ENCODE measurements at regions of chr6 and their contacts with region 1.

Region 1: GRCh38 chr6:106556368-106556960 is 72.8 kb downstream of the RTN4IP1 start:
- DNase-seq: peak in 1 of 2 experiments; percentile 52
- H3K4me3 ChIP-seq: no peak overlapping the region
- H3K4me1 ChIP-seq: peaks cover 4% of the 10 kb centered on the region; the same call in 1 of the 2 replicates
- H3K27me3 ChIP-seq: no peaks in the 10 kb centered on the region

Region 2: GRCh38 chr6:106339334-106340029 is 217.0 kb before region 1 on chr6:
- in situ Hi-C with region 1: loop called (anchors 10 kb)
- DNase-seq: peak; percentile 75 to 76
- H3K4me3 ChIP-seq: no peak overlapping the region
- H3K4me1 ChIP-seq: no peaks in the 10 kb centered on the region
- H3K27me3 ChIP-seq: no peaks in the 10 kb centered on the region; the same call in 1 of the 2 replicates

Region 3: GRCh38 chr6:107345393-107345792 is 788.9 kb after region 1 on chr6:
- in situ Hi-C with region 1: no loop called
- DNase-seq: no peak
- H3K4me3 ChIP-seq: no peak overlapping the region
- H3K4me1 ChIP-seq: peaks cover 4% of the 10 kb centered on the region; the same call in 1 of the 2 replicates
- H3K27me3 ChIP-seq: no peaks in the 10 kb centered on the region